SK-N-SH (cell line): ENCODE measurements at regions of chr2 and their contacts with region 1.

Region 1: GRCh38 chr2:30862054-30862651 is 54.9 kb upstream of the CAPN13 start:
- DNase-seq: peak; percentile 83
- H3K4me3 ChIP-seq: peak overlapping the region in 1 of 2 experiments; percentile 43; a peak in 1 of 4 replicates
- H3K27ac ChIP-seq: peak overlapping the region in 1 of 2 experiments; percentile 62; a peak in 2 of 4 replicates
- H3K4me1 ChIP-seq: peaks cover 0 to 30% of the 10 kb centered on the region in 2 experiments; a peak in 2 of 4 replicates
- H3K27me3 ChIP-seq: no peaks in the 10 kb centered on the region
- CTCF ChIP-seq: peak; percentile 65
- EP300 ChIP-seq: no peak
- RAD21 ChIP-seq: peak; percentile 87

Region 2: DNA sequence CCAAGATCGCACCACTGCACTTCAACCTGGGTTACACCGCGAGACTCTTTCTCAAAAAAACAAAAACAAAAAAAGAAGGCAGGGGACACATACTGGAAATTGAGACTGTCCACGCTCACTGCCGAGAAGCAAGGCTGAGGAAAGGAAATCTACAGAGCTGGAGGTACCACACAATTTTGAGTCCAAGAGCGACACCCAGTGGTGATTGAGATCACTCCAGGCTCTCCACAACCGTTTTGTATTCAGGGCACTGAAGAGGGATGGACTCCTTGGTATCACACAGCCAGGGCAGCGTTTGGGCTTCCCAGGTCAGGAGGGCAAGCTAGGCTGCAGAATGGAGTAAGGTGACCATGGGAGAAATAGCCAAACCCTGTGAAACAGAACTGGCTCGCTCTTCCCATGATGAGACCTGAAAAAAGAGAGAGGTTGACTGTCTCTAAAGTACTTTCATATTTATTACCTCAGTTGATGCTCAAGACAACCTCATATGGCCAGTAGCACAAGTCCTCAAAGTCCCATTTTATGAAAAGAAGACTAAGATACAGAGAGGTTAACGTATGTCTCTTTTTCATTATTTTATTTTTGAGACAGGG is 789.8 kb before region 1 on chr2:
- CTCF ChIA-PET with region 1: no interaction called
- POLR2A ChIA-PET with region 1: no interaction called
- DNase-seq: peak; percentile 82
- H3K4me3 ChIP-seq: no peak overlapping the region
- H3K27ac ChIP-seq: no peak overlapping the region
- H3K4me1 ChIP-seq: peaks cover 0 to 2% of the 10 kb centered on the region in 2 experiments; a peak in 1 of 4 replicates
- H3K27me3 ChIP-seq: peaks cover 6% of the 10 kb centered on the region; the same call in 1 of the 2 replicates
- CTCF ChIP-seq: peak; percentile 87
- EP300 ChIP-seq: no peak
- RAD21 ChIP-seq: peak; percentile 99

Region 3: DNA sequence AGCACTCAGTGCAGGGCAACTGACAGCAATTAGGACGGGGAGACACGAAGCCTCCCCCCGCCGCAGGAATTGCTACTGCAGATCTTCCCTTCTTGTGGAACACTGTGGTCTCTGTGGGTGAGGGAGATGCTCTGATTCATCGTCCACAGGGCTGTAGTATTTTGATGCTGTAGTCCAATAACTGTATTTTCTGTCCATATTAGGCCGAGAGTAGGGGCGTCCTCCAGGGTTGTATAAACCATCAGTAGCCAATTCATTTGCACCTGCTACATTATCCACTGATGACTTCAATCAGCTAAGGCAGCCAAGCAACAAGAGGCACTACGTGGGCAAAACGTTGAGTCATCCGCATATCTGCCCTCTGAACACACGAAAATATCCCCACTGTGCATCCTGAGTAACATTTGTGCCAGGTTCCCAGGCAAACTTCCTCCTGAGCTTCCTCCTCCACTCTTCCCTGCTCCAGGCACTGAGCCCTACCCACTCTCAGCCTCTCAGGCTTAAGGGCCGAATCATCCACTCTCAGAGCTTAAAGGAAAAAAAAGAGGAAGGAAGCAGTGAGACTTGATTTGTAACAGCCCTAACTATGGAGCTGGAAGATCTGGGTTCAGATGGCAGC is 568.7 kb before region 1 on chr2:
- CTCF ChIA-PET with region 1: no interaction called
- POLR2A ChIA-PET with region 1: no interaction called
- DNase-seq: no peak
- H3K4me3 ChIP-seq: no peak overlapping the region
- H3K27ac ChIP-seq: peak overlapping the region in 1 of 2 experiments; percentile 65; a peak in 2 of 4 replicates
- H3K4me1 ChIP-seq: peaks cover 6 to 7% of the 10 kb centered on the region in 2 experiments; a peak in 2 of 4 replicates
- H3K27me3 ChIP-seq: no peaks in the 10 kb centered on the region
- CTCF ChIP-seq: no peak
- EP300 ChIP-seq: peak in 1 of 2 experiments; percentile 67; a peak in 1 of 4 replicates
- RAD21 ChIP-seq: no peak

Region 4: GRCh38 chr2:30730736-30731647 is 131.2 kb before region 1 on chr2:
- CTCF ChIA-PET with region 1: interaction called, 19 read pairs
- POLR2A ChIA-PET with region 1: interaction called, 3 read pairs
- DNase-seq: no peak
- H3K4me3 ChIP-seq: no peak overlapping the region
- H3K27ac ChIP-seq: no peak overlapping the region
- H3K4me1 ChIP-seq: peaks cover 0 to 14% of the 10 kb centered on the region in 2 experiments; a peak in 2 of 4 replicates
- H3K27me3 ChIP-seq: peaks cover 10% of the 10 kb centered on the region
- CTCF ChIP-seq: no peak
- EP300 ChIP-seq: no peak
- RAD21 ChIP-seq: no peak

Region 5: DNA sequence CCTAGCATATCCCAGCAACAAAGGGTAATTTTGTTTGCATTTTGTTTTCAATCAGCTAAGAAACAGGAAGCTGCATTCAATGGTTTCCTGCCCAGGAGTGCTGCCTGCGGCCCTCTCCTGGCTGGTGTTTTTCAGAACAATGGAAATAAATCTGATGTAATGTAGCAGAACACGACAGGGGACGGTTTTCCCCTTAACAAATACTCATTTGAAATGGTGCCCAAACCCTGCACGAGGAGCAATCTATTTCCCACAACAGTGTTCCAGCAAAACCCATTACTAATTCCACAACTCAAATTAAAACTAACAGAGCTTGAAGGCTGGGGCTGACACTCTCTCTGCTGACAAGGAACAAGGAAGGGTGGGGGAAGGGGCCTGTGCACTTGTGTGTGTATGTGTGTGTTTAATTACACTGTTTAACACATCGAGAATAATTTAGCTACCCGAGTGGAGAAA is 63.6 kb before region 1 on chr2:
- CTCF ChIA-PET with region 1: interaction called, 21 read pairs
- POLR2A ChIA-PET with region 1: no interaction called
- DNase-seq: no peak
- H3K4me3 ChIP-seq: no peak overlapping the region
- H3K27ac ChIP-seq: peak overlapping the region in 1 of 2 experiments; percentile 26; a peak in 1 of 4 replicates
- H3K4me1 ChIP-seq: peaks cover 0 to 13% of the 10 kb centered on the region in 2 experiments; a peak in 1 of 4 replicates
- H3K27me3 ChIP-seq: no peaks in the 10 kb centered on the region
- CTCF ChIP-seq: no peak
- EP300 ChIP-seq: no peak
- RAD21 ChIP-seq: no peak

Region 6: GRCh38 chr2:30871980-30872789 is 10.0 kb after region 1 on chr2:
- CTCF ChIA-PET with region 1: interaction called, 54 read pairs
- POLR2A ChIA-PET with region 1: no interaction called
- DNase-seq: no peak
- H3K4me3 ChIP-seq: no peak overlapping the region
- H3K27ac ChIP-seq: peak overlapping the region in 1 of 2 experiments; percentile 99; a peak in 2 of 4 replicates
- H3K4me1 ChIP-seq: peaks cover 0 to 32% of the 10 kb centered on the region in 2 experiments; a peak in 2 of 4 replicates
- H3K27me3 ChIP-seq: no peaks in the 10 kb centered on the region
- CTCF ChIP-seq: no peak
- EP300 ChIP-seq: peak in 1 of 2 experiments; percentile 46; a peak in 1 of 4 replicates
- RAD21 ChIP-seq: no peak; the same call in 1 of the 2 replicates

Region 7: GRCh38 chr2:30979822-30980245 is 117.7 kb after region 1 on chr2:
- CTCF ChIA-PET with region 1: interaction called, 15 read pairs
- POLR2A ChIA-PET with region 1: no interaction called
- DNase-seq: peak; percentile 55
- H3K4me3 ChIP-seq: no peak overlapping the region
- H3K27ac ChIP-seq: peak overlapping the region in 1 of 2 experiments; percentile 80; a peak in 2 of 4 replicates
- H3K4me1 ChIP-seq: peaks cover 0 to 57% of the 10 kb centered on the region in 2 experiments; a peak in 2 of 4 replicates
- H3K27me3 ChIP-seq: no peaks in the 10 kb centered on the region
- CTCF ChIP-seq: peak; percentile 11; the same call in 1 of the 2 replicates
- EP300 ChIP-seq: no peak
- RAD21 ChIP-seq: peak; percentile 48

Region 8: GRCh38 chr2:31138037-31138962 is 276.1 kb after region 1 on chr2 and contains the start of gene GALNT14:
- CTCF ChIA-PET with region 1: interaction called, 106 read pairs
- POLR2A ChIA-PET with region 1: no interaction called
- DNase-seq: peak; percentile 98
- H3K4me3 ChIP-seq: peak within 1 kb of the TSS; percentile 55 to 64
- H3K27ac ChIP-seq: peak within 1 kb of the TSS in 1 of 2 experiments; percentile 68; a peak in 2 of 4 replicates
- H3K4me1 ChIP-seq: peaks cover 0 to 22% of the 10 kb centered on the region in 2 experiments; a peak in 1 of 4 replicates
- H3K27me3 ChIP-seq: peaks cover 57% of the 10 kb centered on the region
- CTCF ChIP-seq: peak; percentile 52
- EP300 ChIP-seq: peak in 1 of 2 experiments; percentile 16; a peak in 1 of 4 replicates
- RAD21 ChIP-seq: peak; percentile 67
- polyA plus RNA-seq, gene GALNT14: 1.6 and 1.8 TPM in 2 replicates

Region 9: GRCh38 chr2:31980674-31981356 is 1118.7 kb after region 1 on chr2:
- CTCF ChIA-PET with region 1: no interaction called
- POLR2A ChIA-PET with region 1: no interaction called
- DNase-seq: no peak
- H3K4me3 ChIP-seq: no peak overlapping the region
- H3K27ac ChIP-seq: peak overlapping the region in 1 of 2 experiments; percentile 38; a peak in 1 of 4 replicates
- H3K4me1 ChIP-seq: no peaks in the 10 kb centered on the region; a peak in 1 of 4 replicates
- H3K27me3 ChIP-seq: no peaks in the 10 kb centered on the region
- CTCF ChIP-seq: no peak
- EP300 ChIP-seq: no peak
- RAD21 ChIP-seq: no peak